Activated CD8-positive, alpha-beta T cell treated with anti-CD3 and anti-CD28 coated beads for 36 hours (primary cell): ENCODE measurements at regions of chr15 and their contacts with region 1.

Region 1: GRCh38 chr15:43285609-43286037 is 18.9 kb upstream of the TGM5 start:
- DNase-seq: peak; percentile 77
- ATAC-seq: peak; percentile 80
- H3K4me3 Mint-ChIP-seq: no peak overlapping the region
- H3K27ac Mint-ChIP-seq: no peak overlapping the region
- H3K4me1 Mint-ChIP-seq: no peaks in the 10 kb centered on the region
- H3K27me3 Mint-ChIP-seq: no peaks in the 10 kb centered on the region
- CTCF ChIP-seq: peak; percentile 83

Region 2: GRCh38 chr15:42891569-42891968 is 394.1 kb before region 1 on chr15:
- CTCF ChIA-PET with region 1: no interaction called
- POLR2A ChIA-PET with region 1: no interaction called
- intact Hi-C with region 1: no loop called
- DNase-seq: no peak
- ATAC-seq: no peak
- H3K4me3 Mint-ChIP-seq: no peak overlapping the region
- H3K27ac Mint-ChIP-seq: no peak overlapping the region
- H3K4me1 Mint-ChIP-seq: peaks cover 5% of the 10 kb centered on the region
- H3K27me3 Mint-ChIP-seq: no peaks in the 10 kb centered on the region
- CTCF ChIP-seq: no peak

Region 3: GRCh38 chr15:43194795-43195194 is 90.8 kb before region 1 on chr15:
- CTCF ChIA-PET with region 1: interaction called, 13 read pairs
- POLR2A ChIA-PET with region 1: no interaction called
- intact Hi-C with region 1: no loop called
- DNase-seq: no peak
- ATAC-seq: no peak
- H3K4me3 Mint-ChIP-seq: no peak overlapping the region
- H3K27ac Mint-ChIP-seq: no peak overlapping the region
- H3K4me1 Mint-ChIP-seq: no peaks in the 10 kb centered on the region
- H3K27me3 Mint-ChIP-seq: no peaks in the 10 kb centered on the region
- CTCF ChIP-seq: no peak

Region 4: GRCh38 chr15:43218908-43219706 is 66.5 kb before region 1 on chr15:
- CTCF ChIA-PET with region 1: interaction called, 219 read pairs
- POLR2A ChIA-PET with region 1: no interaction called
- intact Hi-C with region 1: no loop called
- DNase-seq: peak; percentile 41
- ATAC-seq: peak; percentile 39
- H3K4me3 Mint-ChIP-seq: no peak overlapping the region
- H3K27ac Mint-ChIP-seq: no peak overlapping the region
- H3K4me1 Mint-ChIP-seq: no peaks in the 10 kb centered on the region
- H3K27me3 Mint-ChIP-seq: peaks cover 1% of the 10 kb centered on the region
- CTCF ChIP-seq: no peak

Region 5: DNA sequence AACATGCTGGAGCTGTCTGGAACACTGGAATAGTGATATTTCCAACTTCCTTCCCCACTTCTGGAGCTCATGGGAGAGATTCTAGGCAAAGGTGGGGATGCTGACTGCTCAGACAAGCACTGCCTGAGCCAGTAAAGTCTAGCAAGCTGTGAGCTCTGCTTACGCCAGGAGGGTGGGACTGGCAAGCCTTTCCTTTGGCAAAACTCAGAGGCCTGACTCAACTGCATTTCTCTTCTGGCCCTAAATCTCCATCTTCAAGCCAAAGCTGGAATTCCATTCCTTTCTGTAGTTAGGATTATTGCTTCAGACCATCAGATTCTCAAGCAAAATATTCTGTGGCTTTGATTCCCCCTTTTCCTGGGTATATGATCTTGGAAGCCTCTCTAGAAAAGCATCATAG is 44.5 kb before region 1 on chr15:
- CTCF ChIA-PET with region 1: interaction called, 18 read pairs
- POLR2A ChIA-PET with region 1: no interaction called
- intact Hi-C with region 1: no loop called
- DNase-seq: no peak
- ATAC-seq: no peak
- H3K4me3 Mint-ChIP-seq: no peak overlapping the region
- H3K27ac Mint-ChIP-seq: no peak overlapping the region
- H3K4me1 Mint-ChIP-seq: peaks cover 12% of the 10 kb centered on the region
- H3K27me3 Mint-ChIP-seq: peaks cover 2% of the 10 kb centered on the region
- CTCF ChIP-seq: no peak

Region 6: GRCh38 chr15:43268111-43269105 is 17.2 kb before region 1 on chr15:
- CTCF ChIA-PET with region 1: interaction called, 18 read pairs
- POLR2A ChIA-PET with region 1: no interaction called
- intact Hi-C with region 1: no loop called
- DNase-seq: peak; percentile 72
- ATAC-seq: peak; percentile 75
- H3K4me3 Mint-ChIP-seq: no peak overlapping the region
- H3K27ac Mint-ChIP-seq: no peak overlapping the region
- H3K4me1 Mint-ChIP-seq: no peaks in the 10 kb centered on the region
- H3K27me3 Mint-ChIP-seq: peaks cover 8% of the 10 kb centered on the region
- CTCF ChIP-seq: peak; percentile 58

Region 7: GRCh38 chr15:43302205-43302817 is 16.7 kb after region 1 on chr15:
- CTCF ChIA-PET with region 1: interaction called, 30 read pairs
- POLR2A ChIA-PET with region 1: no interaction called
- intact Hi-C with region 1: no loop called
- DNase-seq: no peak
- ATAC-seq: no peak
- H3K4me3 Mint-ChIP-seq: no peak within 1 kb of the TSS
- H3K27ac Mint-ChIP-seq: no peak within 1 kb of the TSS
- H3K4me1 Mint-ChIP-seq: no peaks in the 10 kb centered on the region
- H3K27me3 Mint-ChIP-seq: peaks cover 16% of the 10 kb centered on the region
- CTCF ChIP-seq: no peak